CD4-positive, alpha-beta T cell (primary cell): ENCODE measurements at regions of chr6 and their contacts with region 1.

Region 1: DNA sequence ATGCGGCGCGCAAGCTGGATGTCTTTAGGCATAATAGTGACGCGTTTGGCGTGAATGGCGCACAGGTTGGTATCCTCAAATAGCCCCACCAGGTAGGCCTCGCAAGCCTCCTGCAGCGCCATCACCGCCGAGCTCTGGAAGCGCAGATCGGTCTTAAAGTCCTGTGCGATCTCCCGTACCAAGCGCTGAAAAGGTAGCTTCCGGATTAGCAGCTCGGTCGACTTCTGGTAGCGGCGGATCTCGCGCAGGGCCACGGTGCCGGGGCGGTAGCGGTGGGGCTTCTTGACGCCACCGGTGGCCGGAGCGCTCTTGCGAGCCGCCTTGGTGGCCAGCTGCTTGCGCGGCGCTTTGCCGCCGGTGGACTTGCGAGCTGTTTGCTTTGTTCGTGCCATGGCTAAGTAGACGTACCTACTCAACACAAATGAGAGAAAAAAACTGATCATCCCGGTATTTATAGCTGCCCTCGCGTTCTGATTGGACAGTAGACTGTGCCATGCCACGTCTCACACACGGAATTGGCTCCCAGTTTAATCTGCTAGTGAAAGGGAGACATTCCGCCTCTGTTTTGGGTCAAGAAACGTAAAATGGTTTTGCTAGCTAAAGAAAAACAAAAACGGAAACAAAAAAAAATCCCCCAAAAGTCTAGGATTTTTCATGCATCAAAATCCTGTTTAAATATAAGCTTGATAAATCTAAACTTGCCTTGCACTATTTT is 40.1 kb downstream of the OR2B2 start:
- DNase-seq: peak; percentile 71 to 97 (median 82)
- ATAC-seq: peak; percentile 75
- H3K4me3 ChIP-seq: peak overlapping the region; percentile 86
- H3K4me3 Mint-ChIP-seq: peak overlapping the region; percentile 93
- H3K27ac ChIP-seq: peak overlapping the region; percentile 89
- H3K27ac Mint-ChIP-seq: peak overlapping the region; percentile 93
- H3K4me1 ChIP-seq: peaks cover 39% of the 10 kb centered on the region
- H3K4me1 Mint-ChIP-seq: peaks cover 41% of the 10 kb centered on the region
- H3K27me3 ChIP-seq: no peaks in the 10 kb centered on the region
- H3K27me3 Mint-ChIP-seq: no peaks in the 10 kb centered on the region
- CTCF ChIP-seq: peak; percentile 43

Region 2: DNA sequence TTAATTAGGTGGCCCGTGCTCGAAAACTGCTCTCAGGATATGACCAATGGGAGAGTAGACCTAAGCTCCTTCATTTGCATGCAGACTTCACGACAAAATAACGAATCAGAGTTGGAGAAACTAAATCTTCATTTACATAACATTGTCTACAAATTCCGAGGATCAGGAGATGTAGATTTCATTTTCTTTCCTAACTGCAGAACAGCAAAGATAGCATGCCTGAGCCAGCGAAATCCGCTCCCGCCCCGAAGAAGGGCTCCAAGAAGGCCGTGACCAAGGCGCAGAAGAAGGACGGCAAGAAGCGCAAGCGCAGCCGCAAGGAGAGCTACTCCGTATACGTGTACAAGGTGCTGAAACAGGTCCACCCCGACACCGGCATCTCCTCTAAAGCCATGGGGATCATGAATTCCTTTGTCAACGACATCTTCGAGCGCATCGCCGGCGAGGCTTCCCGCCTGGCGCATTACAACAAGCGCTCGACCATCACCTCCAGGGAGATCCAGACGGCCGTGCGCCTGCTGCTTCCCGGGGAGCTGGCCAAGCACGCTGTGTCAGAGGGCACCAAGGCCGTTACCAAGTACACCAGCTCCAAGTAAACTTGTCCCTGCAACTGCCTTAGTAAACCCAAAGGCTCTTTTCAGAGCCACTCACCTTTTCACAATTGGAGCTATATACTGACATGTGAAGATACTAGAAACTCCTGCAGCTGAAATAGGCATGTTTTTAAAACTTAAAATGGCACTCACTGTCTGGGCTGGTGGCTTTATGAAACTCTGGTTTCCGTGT is 1688.3 kb before region 1 on chr6:
- CTCF ChIA-PET with region 1: no interaction called
- POLR2A ChIA-PET with region 1: interaction called, 25 read pairs
- intact Hi-C with region 1: no loop called
- DNase-seq: peak in 13 of 14 experiments; percentile 20 to 94 (median 48)
- ATAC-seq: peak; percentile 89
- H3K4me3 ChIP-seq: peak overlapping the region; percentile 62
- H3K4me3 Mint-ChIP-seq: peak overlapping the region; percentile 99
- H3K27ac ChIP-seq: peak overlapping the region; percentile 43 to 72
- H3K27ac Mint-ChIP-seq: peak overlapping the region; percentile 86
- H3K4me1 ChIP-seq: peaks cover 34% of the 10 kb centered on the region
- H3K4me1 Mint-ChIP-seq: peaks cover 42% of the 10 kb centered on the region
- H3K27me3 ChIP-seq: no peaks in the 10 kb centered on the region
- H3K27me3 Mint-ChIP-seq: no peaks in the 10 kb centered on the region
- CTCF ChIP-seq: no peak

Region 3: GRCh38 chr6:27753668-27754407 is 118.2 kb before region 1 on chr6:
- CTCF ChIA-PET with region 1: interaction called, 4 read pairs
- POLR2A ChIA-PET with region 1: interaction called, 11 read pairs
- intact Hi-C with region 1: no loop called
- DNase-seq: peak; percentile 31 to 81 (median 54)
- ATAC-seq: peak; percentile 11
- H3K4me3 ChIP-seq: peak overlapping the region; percentile 71
- H3K4me3 Mint-ChIP-seq: peak overlapping the region; percentile 97
- H3K27ac ChIP-seq: no peak overlapping the region
- H3K27ac Mint-ChIP-seq: peak overlapping the region; percentile 98
- H3K4me1 ChIP-seq: peaks cover 22% of the 10 kb centered on the region
- H3K4me1 Mint-ChIP-seq: peaks cover 41% of the 10 kb centered on the region
- H3K27me3 ChIP-seq: no peaks in the 10 kb centered on the region
- H3K27me3 Mint-ChIP-seq: peaks cover 10% of the 10 kb centered on the region
- CTCF ChIP-seq: no peak

Region 4: GRCh38 chr6:27795697-27796494 is 76.2 kb before region 1 on chr6:
- CTCF ChIA-PET with region 1: interaction called, 5 read pairs
- POLR2A ChIA-PET with region 1: interaction called, 27 read pairs
- intact Hi-C with region 1: no loop called
- DNase-seq: peak in 9 of 14 experiments; percentile 11 to 88 (median 36)
- ATAC-seq: peak; percentile 72
- H3K4me3 ChIP-seq: no peak overlapping the region
- H3K4me3 Mint-ChIP-seq: peak overlapping the region; percentile 47
- H3K27ac ChIP-seq: no peak overlapping the region
- H3K27ac Mint-ChIP-seq: peak overlapping the region; percentile 80
- H3K4me1 ChIP-seq: peaks cover 20% of the 10 kb centered on the region
- H3K4me1 Mint-ChIP-seq: peaks cover 31% of the 10 kb centered on the region
- H3K27me3 ChIP-seq: peaks cover 5 to 9% of the 10 kb centered on the region in 2 experiments
- H3K27me3 Mint-ChIP-seq: peaks cover 18% of the 10 kb centered on the region
- CTCF ChIP-seq: peak; percentile 80

Region 5: DNA sequence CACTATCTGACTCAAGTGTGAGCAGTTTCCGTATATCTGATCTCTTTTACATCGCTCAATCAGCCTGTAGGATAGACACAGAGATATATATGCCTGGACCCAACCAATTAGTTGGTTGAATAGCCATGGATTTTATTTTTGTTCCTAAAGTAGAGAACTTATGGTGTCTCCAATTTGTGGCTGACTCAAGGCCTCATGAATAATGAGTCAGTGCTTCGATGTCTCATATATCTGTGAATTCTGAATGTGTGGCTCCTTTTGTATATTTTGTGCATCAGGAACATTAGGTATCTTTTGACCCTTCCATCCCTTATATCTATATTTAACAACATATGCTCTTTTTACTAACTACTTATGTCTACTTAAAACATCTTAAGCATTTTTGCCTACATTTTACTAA is 24.4 kb before region 1 on chr6:
- CTCF ChIA-PET with region 1: no interaction called
- POLR2A ChIA-PET with region 1: interaction called, 13 read pairs
- intact Hi-C with region 1: no loop called
- DNase-seq: no peak
- ATAC-seq: no peak
- H3K4me3 ChIP-seq: no peak overlapping the region
- H3K4me3 Mint-ChIP-seq: no peak overlapping the region
- H3K27ac ChIP-seq: no peak overlapping the region
- H3K27ac Mint-ChIP-seq: no peak overlapping the region
- H3K4me1 ChIP-seq: no peaks in the 10 kb centered on the region
- H3K4me1 Mint-ChIP-seq: no peaks in the 10 kb centered on the region
- H3K27me3 ChIP-seq: no peaks in the 10 kb centered on the region
- H3K27me3 Mint-ChIP-seq: no peaks in the 10 kb centered on the region
- CTCF ChIP-seq: no peak